H1 (cell line): ENCODE measurements at regions of chr5 and their contacts with region 1.

Region 1: DNA sequence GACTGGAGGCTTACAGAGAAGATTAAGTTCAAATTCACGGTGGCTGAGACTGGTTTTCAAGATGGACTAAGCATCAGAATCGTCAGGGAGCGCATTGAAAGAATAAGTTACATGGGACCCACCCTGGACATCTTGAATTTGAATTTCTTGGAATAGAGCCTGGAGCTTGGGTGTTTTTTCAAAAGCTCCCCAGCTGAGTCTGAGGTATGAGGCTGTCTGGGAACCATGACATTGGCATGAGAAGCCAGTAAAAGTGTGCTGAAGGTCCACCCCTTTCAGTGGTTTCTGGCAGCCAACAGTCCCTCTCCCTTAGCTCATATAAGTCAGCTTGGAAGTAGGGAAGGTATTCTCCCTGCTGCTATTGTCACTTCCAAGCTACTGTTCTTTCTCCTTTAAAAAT is 97.8 kb downstream of the MAST4 start:
- DNase-seq: no peak
- H3K4me3 ChIP-seq: no peak overlapping the region
- H3K27ac ChIP-seq: no peak overlapping the region
- H3K4me1 ChIP-seq: no peaks in the 10 kb centered on the region
- H3K27me3 ChIP-seq: peaks cover 0 to 3% (median under 1%) of the 10 kb centered on the region in 4 experiments; a peak in 2 of 7 replicates
- CTCF ChIP-seq: no peak
- EP300 ChIP-seq: no peak
- POLR2A ChIP-seq: no peak
- RAD21 ChIP-seq: no peak

Region 2: DNA sequence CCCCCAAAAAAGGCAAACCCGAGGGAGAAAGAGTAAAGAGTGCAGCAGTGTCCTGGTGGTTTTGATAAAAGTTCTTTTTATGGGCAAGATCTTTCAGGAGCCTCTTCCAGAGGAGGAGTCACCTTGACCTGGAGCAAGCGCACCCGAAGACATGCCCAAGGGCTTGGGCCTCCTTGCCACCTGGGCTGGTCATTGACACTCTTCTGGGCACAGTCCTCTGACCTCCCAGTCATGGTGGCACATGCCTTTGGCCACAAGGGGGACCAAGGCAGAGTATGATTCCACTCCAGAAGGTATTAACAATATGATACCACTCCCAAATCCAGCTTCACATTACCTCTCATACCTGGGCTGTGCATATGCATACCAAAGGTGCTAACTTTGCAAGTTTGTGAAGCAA is 13.3 kb before region 1 on chr5:
- CTCF ChIA-PET with region 1: interaction called, 10 read pairs
- POLR2A ChIA-PET with region 1: no interaction called
- DNase-seq: no peak
- H3K4me3 ChIP-seq: no peak overlapping the region
- H3K27ac ChIP-seq: no peak overlapping the region
- H3K4me1 ChIP-seq: peaks cover 0 to 2% (median 0%) of the 10 kb centered on the region in 4 experiments; a peak in 2 of 7 replicates
- H3K27me3 ChIP-seq: peaks cover 0 to 2% (median 0%) of the 10 kb centered on the region in 4 experiments; a peak in 3 of 7 replicates
- CTCF ChIP-seq: peak in 2 of 3 experiments; percentile 53; a peak in 2 of 4 replicates
- EP300 ChIP-seq: no peak
- POLR2A ChIP-seq: no peak
- RAD21 ChIP-seq: peak in 1 of 2 experiments; percentile 21; a peak in 1 of 4 replicates